PC-3 (cell line): ENCODE measurements at regions of chr10 and their contacts with region 1.

Region 1: GRCh38 chr10:33566426-33566825 is 232.0 kb upstream of the NRP1 start:
- DNase-seq: no peak
- ATAC-seq: no peak
- H3K4me3 ChIP-seq: no peak overlapping the region
- H3K27ac ChIP-seq: no peak overlapping the region
- H3K4me1 ChIP-seq: peaks cover under 1% of the 10 kb centered on the region
- H3K27me3 ChIP-seq: no peaks in the 10 kb centered on the region
- CTCF ChIP-seq: no peak

Region 2: GRCh38 chr10:33273295-33274002 is 293.0 kb before region 1 on chr10:
- CTCF ChIA-PET with region 1: no interaction called
- POLR2A ChIA-PET with region 1: no interaction called
- intact Hi-C with region 1: no loop called
- DNase-seq: peak; percentile 100
- ATAC-seq: peak; percentile 87
- H3K4me3 ChIP-seq: peak overlapping the region; percentile 47
- H3K27ac ChIP-seq: peak overlapping the region; percentile 71
- H3K4me1 ChIP-seq: peaks cover 66% of the 10 kb centered on the region
- H3K27me3 ChIP-seq: no peaks in the 10 kb centered on the region
- CTCF ChIP-seq: no peak

Region 3: DNA sequence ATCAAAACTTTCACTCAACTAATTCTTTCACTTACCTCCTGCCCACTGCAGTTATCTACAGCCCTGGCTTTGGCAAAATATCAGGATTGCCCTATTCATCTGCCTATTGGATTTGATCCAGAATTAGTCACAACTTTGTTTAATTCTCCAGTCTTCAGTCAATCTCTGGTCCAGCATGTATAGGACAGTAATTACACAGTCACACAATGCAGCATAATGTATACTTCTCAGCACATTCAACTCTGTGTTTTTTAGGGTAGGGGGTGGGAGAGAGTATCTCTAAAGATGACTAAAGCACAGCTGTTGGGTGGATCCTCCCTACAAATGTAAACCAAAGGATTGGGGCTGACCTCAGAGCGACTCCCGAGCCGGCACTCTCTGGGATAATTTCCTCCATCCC is 214.3 kb before region 1 on chr10:
- CTCF ChIA-PET with region 1: no interaction called
- POLR2A ChIA-PET with region 1: interaction called, 10 read pairs
- intact Hi-C with region 1: no loop called
- DNase-seq: peak; percentile 100
- ATAC-seq: peak; percentile 69
- H3K4me3 ChIP-seq: peak overlapping the region; percentile 48
- H3K27ac ChIP-seq: peak overlapping the region; percentile 63
- H3K4me1 ChIP-seq: peaks cover 82% of the 10 kb centered on the region
- H3K27me3 ChIP-seq: no peaks in the 10 kb centered on the region
- CTCF ChIP-seq: no peak

Region 4: GRCh38 chr10:33465747-33466146 is 100.7 kb before region 1 on chr10:
- CTCF ChIA-PET with region 1: no interaction called
- POLR2A ChIA-PET with region 1: interaction called, 11 read pairs
- intact Hi-C with region 1: no loop called
- DNase-seq: no peak
- ATAC-seq: no peak
- H3K4me3 ChIP-seq: no peak overlapping the region
- H3K27ac ChIP-seq: no peak overlapping the region
- H3K4me1 ChIP-seq: peaks cover 3% of the 10 kb centered on the region; the same call in 1 of the 2 replicates
- H3K27me3 ChIP-seq: no peaks in the 10 kb centered on the region
- CTCF ChIP-seq: no peak